Activated CD4-positive, alpha-beta memory T cell treated with anti-CD3 and anti-CD28 coated beads for 36 hours (primary cell): ENCODE measurements at regions of chr19 and their contacts with region 1.

Region 1: GRCh38 chr19:29811125-29812079 is at the start of gene CCNE1:
- DNase-seq: peak; percentile 96
- H3K4me3 Mint-ChIP-seq: peak within 1 kb of the TSS; percentile 82
- H3K27ac Mint-ChIP-seq: peak within 1 kb of the TSS; percentile 86
- H3K4me1 Mint-ChIP-seq: peaks cover 17% of the 10 kb centered on the region
- H3K27me3 Mint-ChIP-seq: no peaks in the 10 kb centered on the region
- total RNA-seq, gene CCNE1: 29.3 to 29.7 TPM

Region 2: GRCh38 chr19:29831041-29831548 is 19.7 kb after region 1 on chr19:
- CTCF ChIA-PET with region 1: no interaction called
- POLR2A ChIA-PET with region 1: no interaction called
- intact Hi-C with region 1: loop called (anchors 1 kb)
- DNase-seq: peak; percentile 84
- H3K4me3 Mint-ChIP-seq: peak overlapping the region; percentile 69
- H3K27ac Mint-ChIP-seq: peak overlapping the region; percentile 89
- H3K4me1 Mint-ChIP-seq: peaks cover 38% of the 10 kb centered on the region
- H3K27me3 Mint-ChIP-seq: no peaks in the 10 kb centered on the region

Region 3: DNA sequence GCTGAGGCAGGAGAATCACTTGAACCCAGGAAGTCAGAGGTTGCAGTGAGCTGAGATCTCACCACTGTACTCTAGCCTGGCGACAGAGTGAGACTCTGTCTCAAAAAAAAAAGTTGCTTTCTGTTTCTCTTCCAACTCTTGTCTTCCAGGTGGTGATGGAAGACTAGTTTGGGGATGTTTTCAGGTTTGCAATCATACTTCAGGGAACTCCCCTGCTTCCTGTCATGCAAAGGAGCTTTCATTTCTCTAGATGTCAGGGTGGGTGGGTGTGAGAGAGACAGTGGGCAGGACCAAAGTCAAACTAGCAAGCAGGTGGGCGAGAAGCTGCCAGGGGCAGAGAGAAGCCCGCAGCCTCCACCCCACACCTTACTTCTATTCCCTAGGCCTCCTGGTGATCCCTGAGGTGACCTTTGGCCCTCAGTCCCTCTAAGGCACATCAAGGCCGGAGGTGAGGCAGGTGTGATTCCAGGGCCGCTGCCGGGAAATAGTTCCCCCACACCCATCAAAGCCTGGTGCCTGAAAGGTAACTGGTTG is 26.1 kb after region 1 on chr19:
- CTCF ChIA-PET with region 1: no interaction called
- POLR2A ChIA-PET with region 1: no interaction called
- intact Hi-C with region 1: loop called (anchors 2 kb)
- DNase-seq: peak; percentile 75
- H3K4me3 Mint-ChIP-seq: peak overlapping the region; percentile 55
- H3K27ac Mint-ChIP-seq: peak overlapping the region; percentile 93
- H3K4me1 Mint-ChIP-seq: peaks cover 46% of the 10 kb centered on the region
- H3K27me3 Mint-ChIP-seq: no peaks in the 10 kb centered on the region

Region 4: DNA sequence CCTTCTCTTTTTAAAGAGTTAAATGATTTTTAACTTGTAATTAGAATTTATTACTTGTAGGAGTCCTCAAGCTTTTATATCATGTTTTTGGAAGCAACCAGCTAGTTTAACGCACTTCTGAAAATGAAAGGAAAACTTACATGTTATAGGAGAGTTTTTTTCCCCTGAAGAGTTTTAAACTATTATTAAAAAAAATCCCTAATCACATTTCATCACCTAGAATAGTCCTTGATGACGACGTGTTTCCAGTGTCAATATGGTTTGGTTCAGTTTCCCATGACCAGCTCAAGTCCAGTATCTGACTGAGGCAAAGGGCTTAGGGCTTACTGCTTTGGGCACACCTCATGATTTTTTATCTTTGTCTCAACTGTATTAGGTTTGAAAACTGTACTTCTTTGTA is 166.7 kb after region 1 on chr19:
- CTCF ChIA-PET with region 1: no interaction called
- POLR2A ChIA-PET with region 1: no interaction called
- intact Hi-C with region 1: no loop called
- DNase-seq: no peak
- H3K4me3 Mint-ChIP-seq: no peak overlapping the region
- H3K27ac Mint-ChIP-seq: no peak overlapping the region
- H3K4me1 Mint-ChIP-seq: peaks cover 45% of the 10 kb centered on the region
- H3K27me3 Mint-ChIP-seq: no peaks in the 10 kb centered on the region